Cardiac septum (tissue), 1 donor: ENCODE measurements at regions of chr14 and their contacts with region 1.

Region 1: GRCh38 chr14:61355892-61356325 is 34.5 kb downstream of the PRKCH start:
- DNase-seq: peak; percentile 78

Region 2: GRCh38 chr14:61308198-61308597 is 47.7 kb before region 1 on chr14:
- intact Hi-C with region 1: loop called (anchors 5 kb)
- DNase-seq: no peak

Region 3: DNA sequence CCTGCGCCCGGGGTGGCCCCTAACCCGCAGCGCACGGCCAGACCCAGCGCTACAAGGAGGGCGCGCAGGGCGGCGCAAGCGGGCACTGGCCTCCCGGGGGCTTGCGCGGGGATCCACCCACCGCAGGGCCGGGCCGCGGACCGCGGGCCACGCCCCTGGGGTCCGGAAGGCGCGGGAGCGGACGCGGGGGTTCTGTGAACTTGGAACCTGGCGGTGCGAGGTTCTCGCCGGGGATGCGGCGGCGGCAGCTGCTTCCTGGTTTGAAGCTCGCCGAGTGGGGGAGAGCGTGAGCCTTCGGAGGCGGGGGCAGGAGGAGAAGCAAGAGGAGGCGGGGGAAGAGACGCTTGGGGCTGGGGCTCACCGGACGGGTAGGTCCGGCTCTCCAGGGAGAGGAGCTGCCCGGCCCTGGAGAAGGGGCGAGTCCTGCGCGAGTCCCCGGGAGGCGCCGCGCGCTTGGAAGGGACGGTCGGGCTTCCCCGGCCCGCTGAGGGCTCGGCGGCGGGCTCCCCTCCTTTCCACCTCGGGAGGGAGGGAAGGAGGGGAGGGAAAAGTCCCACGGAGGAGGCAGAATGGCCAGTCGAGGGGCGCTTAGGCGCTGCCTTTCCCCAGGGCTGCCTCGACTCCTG is 34.4 kb before region 1 on chr14 and contains the start of gene PRKCH:
- intact Hi-C with region 1: loop called (anchors 5 kb)
- DNase-seq: peak; percentile 84
- total RNA-seq, gene PRKCH: 17.0 TPM

Region 4: GRCh38 chr14:61418746-61419145 is 62.8 kb after region 1 on chr14:
- intact Hi-C with region 1: loop called (anchors 2 kb)
- DNase-seq: no peak

Region 5: DNA sequence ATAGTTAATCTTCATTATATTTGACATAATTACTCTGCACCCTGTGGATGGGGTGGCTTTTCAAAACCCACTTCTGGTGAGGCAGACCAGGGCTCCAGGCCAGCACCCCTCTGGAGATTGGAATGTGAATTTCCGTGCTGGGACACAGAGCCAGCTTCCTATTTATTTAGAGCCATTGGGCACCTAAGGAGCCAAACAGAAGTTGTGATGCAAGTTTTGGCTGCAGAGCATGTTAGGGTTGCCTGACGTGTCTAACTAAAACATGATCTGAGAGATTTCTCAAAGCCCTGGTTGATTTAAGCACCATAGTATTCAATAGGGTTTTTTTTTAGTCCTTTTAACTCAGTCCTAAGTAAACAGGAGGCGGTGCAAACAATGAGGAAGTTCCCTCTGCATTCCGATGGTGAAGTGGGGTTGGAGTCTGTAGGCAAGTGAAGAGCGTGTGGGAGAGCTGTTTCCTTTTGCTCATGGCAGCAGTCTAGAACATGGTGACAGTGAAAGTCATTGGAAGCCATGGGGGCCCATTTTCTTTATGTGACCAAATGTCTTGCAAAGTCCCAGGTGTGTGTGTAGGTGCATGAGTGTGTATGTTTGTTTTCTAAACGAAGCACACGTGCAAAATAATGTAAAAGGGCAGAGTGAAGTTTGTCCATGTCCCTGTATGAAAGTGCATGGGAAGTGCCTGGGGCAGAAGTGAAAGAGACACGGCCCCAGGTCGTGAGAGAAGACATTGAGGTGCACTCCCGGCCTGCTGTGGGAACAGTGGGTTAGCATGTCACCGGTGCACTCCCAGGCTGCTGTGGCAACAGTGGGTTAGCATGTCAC is 83.2 kb after region 1 on chr14:
- intact Hi-C with region 1: no loop called
- DNase-seq: no peak

Region 6: DNA sequence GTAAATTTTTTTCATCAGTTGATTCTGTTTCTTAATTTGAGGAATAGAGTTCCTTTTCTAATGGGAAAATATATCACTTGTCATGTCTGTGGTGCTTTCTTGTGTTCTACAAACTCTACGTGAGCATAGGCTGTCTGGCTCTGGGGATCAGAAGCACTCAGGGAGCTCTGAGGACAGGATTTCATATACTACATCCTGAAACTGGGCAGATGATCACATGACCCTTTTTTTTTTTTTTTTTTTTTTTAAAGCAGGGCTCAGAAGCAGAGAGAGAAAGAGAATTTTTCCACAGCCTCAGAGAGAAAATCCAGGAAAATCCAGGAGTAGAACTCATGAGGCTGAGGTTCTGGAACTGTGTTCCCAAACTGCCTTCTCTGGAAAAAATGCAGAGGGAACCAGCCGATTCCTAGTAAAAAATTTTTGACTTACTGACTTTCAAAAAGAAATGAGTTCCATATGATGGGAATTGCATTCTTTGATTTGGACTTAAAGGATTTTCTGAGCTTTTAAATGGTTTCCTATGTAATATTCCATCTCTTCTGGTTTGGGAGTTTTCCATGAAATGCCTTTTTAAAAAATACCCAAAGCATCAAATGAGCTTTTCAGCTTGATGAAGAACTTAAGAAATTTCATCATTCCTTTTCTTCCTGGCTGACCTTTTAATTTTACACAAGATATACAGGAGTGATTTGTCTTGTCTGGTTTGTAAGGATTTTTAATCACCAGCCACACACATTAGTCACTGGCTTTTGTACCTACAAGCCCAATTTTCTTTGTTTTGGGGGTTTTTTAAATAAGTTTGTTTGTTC is 156.3 kb after region 1 on chr14:
- intact Hi-C with region 1: no loop called
- DNase-seq: no peak